Heart left ventricle (tissue), 16 donors: ENCODE measurements at regions of chr3 and their contacts with region 1.

Region 1: DNA sequence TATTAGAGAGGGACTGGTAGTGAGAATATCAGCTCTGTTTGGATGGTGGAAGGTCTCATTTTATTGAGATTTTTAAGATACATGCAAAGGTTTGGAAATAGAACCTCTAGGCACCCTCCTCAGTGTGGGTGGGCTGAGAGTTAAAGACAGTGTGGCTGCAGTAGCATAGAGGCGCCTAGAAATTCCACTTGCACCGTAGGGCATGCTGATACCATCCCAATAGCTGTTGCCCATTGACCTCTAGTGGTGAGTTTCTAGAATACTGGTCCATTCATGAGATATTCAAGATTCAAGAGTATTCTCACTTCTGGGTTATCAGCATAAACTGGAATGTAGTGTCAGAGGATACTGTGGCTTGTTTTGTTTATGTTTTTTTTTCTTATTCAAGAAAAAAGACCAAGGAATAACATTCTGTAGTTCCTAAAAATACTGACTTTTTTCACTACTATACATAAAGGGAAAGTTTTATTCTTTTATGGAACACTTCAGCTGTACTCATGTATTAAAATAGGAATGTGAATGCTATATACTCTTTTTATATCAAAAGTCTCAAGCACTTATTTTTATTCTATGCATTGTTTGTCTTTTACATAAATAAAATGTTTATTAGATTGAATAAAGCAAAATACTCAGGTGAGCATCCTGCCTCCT is 87.2 kb downstream of the TGFBR2 start:
- DNase-seq: peak in 4 of 5 donors; percentile 39 to 54 (median 48)
- ATAC-seq: peak; percentile 76 to 82 (median 82)
- H3K4me3 ChIP-seq: no peak overlapping the region
- H3K27ac ChIP-seq: peak overlapping the region in 7 of 12 donors; percentile 17 to 81 (median 35)
- H3K4me1 ChIP-seq: peaks cover 2 to 78% (median 57%) of the 10 kb centered on the region in 12 donors
- H3K27me3 ChIP-seq: no peaks in the 10 kb centered on the region
- CTCF ChIP-seq: peak; percentile 65 to 88 (median 82)
- POLR2A ChIP-seq: no peak

Region 2: DNA sequence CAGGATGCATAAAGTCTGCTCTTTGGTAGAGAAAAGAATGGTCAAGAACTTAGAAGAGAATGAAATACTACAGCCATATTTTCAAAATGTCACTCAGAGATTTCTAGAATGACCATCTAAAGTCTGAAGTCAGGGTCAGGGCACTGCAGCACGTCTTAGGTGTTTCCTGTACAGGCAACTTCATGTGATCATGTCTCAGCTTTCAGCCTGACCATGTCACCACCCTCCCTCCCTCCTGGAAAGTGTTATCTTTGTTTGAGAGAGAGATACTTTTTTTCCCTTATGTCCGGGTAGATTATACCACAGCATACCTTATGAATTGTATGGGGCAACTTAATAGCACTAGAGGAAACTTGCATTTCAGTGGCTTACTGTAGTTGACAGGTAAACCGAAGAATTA is 645.2 kb before region 1 on chr3:
- intact Hi-C with region 1: loop called in 6 of 10 experiments (anchors 5 to 10 kb)
- DNase-seq: no peak
- ATAC-seq: no peak
- H3K4me3 ChIP-seq: no peak overlapping the region
- H3K27ac ChIP-seq: no peak overlapping the region
- H3K4me1 ChIP-seq: peaks cover 0 to 6% (median 0%) of the 10 kb centered on the region in 12 donors
- H3K27me3 ChIP-seq: no peaks in the 10 kb centered on the region
- CTCF ChIP-seq: no peak
- POLR2A ChIP-seq: no peak

Region 3: GRCh38 chr3:30206051-30206450 is 487.5 kb before region 1 on chr3:
- intact Hi-C with region 1: loop called in 4 of 10 experiments (anchors 5 to 10 kb)
- DNase-seq: no peak
- ATAC-seq: no peak
- H3K4me3 ChIP-seq: no peak overlapping the region
- H3K27ac ChIP-seq: no peak overlapping the region
- H3K4me1 ChIP-seq: peaks cover 0 to 5% (median 0%) of the 10 kb centered on the region in 12 donors
- H3K27me3 ChIP-seq: no peaks in the 10 kb centered on the region
- CTCF ChIP-seq: no peak
- POLR2A ChIP-seq: no peak

Region 4: DNA sequence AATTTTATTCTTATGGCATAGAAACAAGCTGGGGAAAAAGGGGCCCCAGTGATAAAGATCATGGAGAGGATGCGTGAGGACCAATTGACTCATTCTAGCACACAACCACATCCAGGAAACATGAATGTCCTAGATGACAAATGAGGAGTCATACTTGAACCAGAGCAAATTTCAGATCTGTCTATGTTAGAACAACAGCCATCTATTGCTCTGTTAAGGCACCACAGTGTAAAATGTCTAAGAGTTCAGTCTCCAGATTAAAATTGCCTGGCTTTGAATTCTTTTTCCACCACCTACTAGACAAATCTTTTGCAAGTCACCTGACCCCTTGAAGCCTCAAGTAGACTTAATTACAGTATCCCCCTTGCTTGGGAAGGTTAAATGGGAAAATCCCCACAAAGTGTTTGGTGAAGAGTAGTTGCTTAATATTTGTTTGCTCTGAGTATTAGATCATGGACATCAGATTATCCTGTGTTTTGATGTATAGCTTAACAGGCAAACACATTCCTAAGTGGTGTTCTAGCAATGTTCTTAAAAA is 345.8 kb before region 1 on chr3:
- intact Hi-C with region 1: loop called in 3 of 10 experiments (anchors 10 kb)
- DNase-seq: no peak
- ATAC-seq: no peak
- H3K4me3 ChIP-seq: no peak overlapping the region
- H3K27ac ChIP-seq: peak overlapping the region in 2 of 12 donors; percentile 38 to 50
- H3K4me1 ChIP-seq: peaks cover 0 to 64% (median 31%) of the 10 kb centered on the region in 12 donors
- H3K27me3 ChIP-seq: no peaks in the 10 kb centered on the region
- CTCF ChIP-seq: no peak
- POLR2A ChIP-seq: no peak

Region 5: DNA sequence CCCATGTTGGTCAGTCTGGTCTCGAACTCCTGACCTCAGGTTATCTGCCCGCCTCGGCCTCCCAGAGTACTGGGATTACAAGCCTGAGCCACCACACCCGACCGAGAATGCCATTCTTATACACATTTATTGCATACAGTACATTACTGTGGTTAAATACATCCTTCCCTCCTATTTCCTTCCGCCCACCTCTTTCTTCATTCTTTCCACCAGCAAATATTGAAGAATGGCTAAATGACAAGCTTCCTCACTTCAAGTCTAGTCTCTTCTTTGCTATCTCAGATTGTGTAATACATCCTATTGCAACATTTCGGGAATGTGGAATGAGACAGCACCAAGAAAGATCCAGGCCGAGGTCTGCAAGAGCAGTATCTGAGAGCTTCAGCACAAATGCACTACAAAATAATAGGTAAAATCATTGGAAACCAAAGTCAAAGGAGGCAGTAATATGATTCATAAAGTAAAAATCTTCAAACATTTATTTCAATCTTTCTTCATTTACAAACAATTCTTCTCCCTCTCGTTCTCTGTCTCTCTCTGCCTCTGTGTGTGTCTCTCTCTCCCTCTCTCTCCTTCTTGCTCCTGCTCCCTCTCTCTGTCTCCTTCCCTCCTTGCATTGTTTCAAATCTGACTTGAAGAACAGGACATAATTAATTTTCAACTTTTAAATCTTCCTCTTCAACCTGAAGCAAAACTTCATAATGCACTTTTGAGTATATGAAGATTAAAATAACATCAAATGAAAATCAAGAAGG is 181.9 kb before region 1 on chr3:
- intact Hi-C with region 1: loop called in 5 of 10 experiments (anchors 5 to 10 kb)
- DNase-seq: peak in 1 of 5 donors; percentile 34
- ATAC-seq: peak; percentile 49 to 91 (median 83)
- H3K4me3 ChIP-seq: no peak overlapping the region
- H3K27ac ChIP-seq: peak overlapping the region; percentile 6 to 71 (median 49)
- H3K4me1 ChIP-seq: peaks cover 0 to 12% (median 3%) of the 10 kb centered on the region in 12 donors
- H3K27me3 ChIP-seq: no peaks in the 10 kb centered on the region
- CTCF ChIP-seq: no peak
- POLR2A ChIP-seq: no peak

Region 6: DNA sequence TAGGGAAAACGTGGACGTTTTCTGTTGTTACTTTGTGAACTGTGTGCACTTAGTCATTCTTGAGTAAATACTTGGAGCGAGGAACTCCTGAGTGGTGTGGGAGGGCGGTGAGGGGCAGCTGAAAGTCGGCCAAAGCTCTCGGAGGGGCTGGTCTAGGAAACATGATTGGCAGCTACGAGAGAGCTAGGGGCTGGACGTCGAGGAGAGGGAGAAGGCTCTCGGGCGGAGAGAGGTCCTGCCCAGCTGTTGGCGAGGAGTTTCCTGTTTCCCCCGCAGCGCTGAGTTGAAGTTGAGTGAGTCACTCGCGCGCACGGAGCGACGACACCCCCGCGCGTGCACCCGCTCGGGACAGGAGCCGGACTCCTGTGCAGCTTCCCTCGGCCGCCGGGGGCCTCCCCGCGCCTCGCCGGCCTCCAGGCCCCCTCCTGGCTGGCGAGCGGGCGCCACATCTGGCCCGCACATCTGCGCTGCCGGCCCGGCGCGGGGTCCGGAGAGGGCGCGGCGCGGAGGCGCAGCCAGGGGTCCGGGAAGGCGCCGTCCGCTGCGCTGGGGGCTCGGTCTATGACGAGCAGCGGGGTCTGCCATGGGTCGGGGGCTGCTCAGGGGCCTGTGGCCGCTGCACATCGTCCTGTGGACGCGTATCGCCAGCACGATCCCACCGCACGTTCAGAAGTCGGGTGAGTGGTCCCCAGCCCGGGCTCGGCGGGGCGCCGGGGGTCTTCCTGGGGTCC is 87.1 kb before region 1 on chr3 and contains the start of gene TGFBR2:
- intact Hi-C with region 1: loop called in 6 of 10 experiments (anchors 2 to 5 kb)
- DNase-seq: peak; percentile 94 to 98 (median 97)
- ATAC-seq: peak; percentile 95 to 98 (median 98)
- H3K4me3 ChIP-seq: peak within 1 kb of the TSS; percentile 67 to 98 (median 94)
- H3K27ac ChIP-seq: peak within 1 kb of the TSS; percentile 94 to 100 (median 99)
- H3K4me1 ChIP-seq: peaks cover 3 to 78% (median 43%) of the 10 kb centered on the region in 12 donors
- H3K27me3 ChIP-seq: no peaks in the 10 kb centered on the region
- CTCF ChIP-seq: peak in 9 of 12 donors; percentile 3 to 45 (median 30)
- POLR2A ChIP-seq: peak in 1 of 2 donors; percentile 94
- total RNA-seq, gene TGFBR2: 82.4 to 217 (median 143) TPM